SK-N-SH (cell line): ENCODE measurements at regions of chr5 and their contacts with region 1.

Region 1: DNA sequence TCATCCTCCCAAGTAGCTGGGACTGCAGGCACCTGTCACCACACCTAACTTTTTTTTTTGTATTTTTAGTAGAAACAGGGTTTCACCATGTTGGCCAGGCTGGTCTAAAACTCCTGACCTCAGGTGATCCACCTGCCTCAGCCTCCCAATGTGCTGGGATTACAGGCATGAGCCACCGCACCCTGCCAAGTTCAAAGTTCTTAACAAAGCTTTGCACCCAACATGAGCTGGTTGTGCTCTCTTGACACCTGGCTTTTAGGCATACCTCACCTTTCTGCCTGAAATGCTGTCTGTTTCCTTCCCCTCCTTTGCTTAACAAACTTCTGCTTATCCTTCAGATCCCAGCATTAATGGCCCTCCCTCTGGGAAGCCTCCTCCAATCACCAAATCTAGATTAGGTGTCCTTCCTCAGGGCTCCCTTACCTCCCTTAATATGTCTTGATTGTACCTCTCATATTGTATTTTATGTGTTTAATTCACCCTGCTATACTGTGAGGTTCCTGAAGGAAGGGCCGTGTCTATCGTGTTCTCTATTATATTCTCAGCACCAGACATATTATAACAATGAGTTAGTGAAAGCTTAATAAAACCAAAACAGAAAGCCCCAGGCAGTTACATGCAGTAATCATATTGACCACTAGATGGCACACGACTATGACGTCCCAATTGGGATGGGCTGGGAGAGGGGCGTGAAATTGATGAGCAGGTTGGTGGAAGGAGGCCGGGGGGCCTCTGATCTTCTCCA is 62.9 kb upstream of the PPARGC1B start:
- DNase-seq: peak; percentile 69
- H3K4me3 ChIP-seq: no peak overlapping the region
- H3K27ac ChIP-seq: no peak overlapping the region
- H3K4me1 ChIP-seq: no peaks in the 10 kb centered on the region; a peak in 1 of 4 replicates
- H3K27me3 ChIP-seq: no peaks in the 10 kb centered on the region
- CTCF ChIP-seq: peak; percentile 86
- EP300 ChIP-seq: no peak
- RAD21 ChIP-seq: peak; percentile 55

Region 2: GRCh38 chr5:149636851-149637246 is 30.4 kb before region 1 on chr5:
- CTCF ChIA-PET with region 1: interaction called, 10 read pairs
- POLR2A ChIA-PET with region 1: no interaction called
- DNase-seq: peak; percentile 81
- H3K4me3 ChIP-seq: peak overlapping the region in 1 of 2 experiments; percentile 43; a peak in 1 of 4 replicates
- H3K27ac ChIP-seq: no peak overlapping the region
- H3K4me1 ChIP-seq: peaks cover 0 to 12% of the 10 kb centered on the region in 2 experiments; a peak in 1 of 4 replicates
- H3K27me3 ChIP-seq: no peaks in the 10 kb centered on the region
- CTCF ChIP-seq: peak; percentile 84
- EP300 ChIP-seq: no peak
- RAD21 ChIP-seq: peak; percentile 99

Region 3: GRCh38 chr5:149646564-149646963 is 20.7 kb before region 1 on chr5:
- CTCF ChIA-PET with region 1: interaction called, 10 read pairs
- POLR2A ChIA-PET with region 1: no interaction called
- DNase-seq: peak; percentile 80
- H3K4me3 ChIP-seq: no peak overlapping the region
- H3K27ac ChIP-seq: peak overlapping the region in 1 of 2 experiments; percentile 72; a peak in 2 of 4 replicates
- H3K4me1 ChIP-seq: peaks cover 0 to 14% of the 10 kb centered on the region in 2 experiments; a peak in 1 of 4 replicates
- H3K27me3 ChIP-seq: no peaks in the 10 kb centered on the region
- CTCF ChIP-seq: no peak
- EP300 ChIP-seq: peak in 1 of 2 experiments; percentile 35; a peak in 1 of 4 replicates
- RAD21 ChIP-seq: no peak

Region 4: GRCh38 chr5:149680810-149681221 is 13.6 kb after region 1 on chr5:
- CTCF ChIA-PET with region 1: interaction called, 11 read pairs
- POLR2A ChIA-PET with region 1: no interaction called
- DNase-seq: no peak
- H3K4me3 ChIP-seq: no peak overlapping the region
- H3K27ac ChIP-seq: no peak overlapping the region
- H3K4me1 ChIP-seq: no peaks in the 10 kb centered on the region
- H3K27me3 ChIP-seq: no peaks in the 10 kb centered on the region; the same call in 1 of the 2 replicates
- CTCF ChIP-seq: no peak
- EP300 ChIP-seq: no peak
- RAD21 ChIP-seq: no peak